Dendritic cell treated with granulocyte-macrophage colony-stimulating factor and Interleukin-4, amounts not matched to agents 40 ng/mL and 50 ng/mL, for 4 days (primary cell): ENCODE measurements at regions of chr1 and their contacts with region 1.

Region 1: GRCh38 chr1:207828485-207829158 is 76.8 kb downstream of the CD46 start:
- H3K4me3 Mint-ChIP-seq: peak overlapping the region; percentile 30
- H3K27ac Mint-ChIP-seq: peak overlapping the region; percentile 95
- H3K4me1 Mint-ChIP-seq: peaks cover 97% of the 10 kb centered on the region
- H3K27me3 Mint-ChIP-seq: no peaks in the 10 kb centered on the region

Region 2: GRCh38 chr1:207848234-207848633 is 19.6 kb after region 1 on chr1:
- intact Hi-C with region 1: loop called (anchors 2 kb)
- H3K4me3 Mint-ChIP-seq: no peak overlapping the region
- H3K27ac Mint-ChIP-seq: peak overlapping the region; percentile 79
- H3K4me1 Mint-ChIP-seq: peaks cover 81% of the 10 kb centered on the region
- H3K27me3 Mint-ChIP-seq: no peaks in the 10 kb centered on the region

Region 3: GRCh38 chr1:207868774-207869721 is 40.4 kb after region 1 on chr1:
- intact Hi-C with region 1: loop called (anchors 1 kb)
- H3K4me3 Mint-ChIP-seq: peak overlapping the region; percentile 91
- H3K27ac Mint-ChIP-seq: peak overlapping the region; percentile 83
- H3K4me1 Mint-ChIP-seq: peaks cover 88% of the 10 kb centered on the region
- H3K27me3 Mint-ChIP-seq: no peaks in the 10 kb centered on the region

Region 4: DNA sequence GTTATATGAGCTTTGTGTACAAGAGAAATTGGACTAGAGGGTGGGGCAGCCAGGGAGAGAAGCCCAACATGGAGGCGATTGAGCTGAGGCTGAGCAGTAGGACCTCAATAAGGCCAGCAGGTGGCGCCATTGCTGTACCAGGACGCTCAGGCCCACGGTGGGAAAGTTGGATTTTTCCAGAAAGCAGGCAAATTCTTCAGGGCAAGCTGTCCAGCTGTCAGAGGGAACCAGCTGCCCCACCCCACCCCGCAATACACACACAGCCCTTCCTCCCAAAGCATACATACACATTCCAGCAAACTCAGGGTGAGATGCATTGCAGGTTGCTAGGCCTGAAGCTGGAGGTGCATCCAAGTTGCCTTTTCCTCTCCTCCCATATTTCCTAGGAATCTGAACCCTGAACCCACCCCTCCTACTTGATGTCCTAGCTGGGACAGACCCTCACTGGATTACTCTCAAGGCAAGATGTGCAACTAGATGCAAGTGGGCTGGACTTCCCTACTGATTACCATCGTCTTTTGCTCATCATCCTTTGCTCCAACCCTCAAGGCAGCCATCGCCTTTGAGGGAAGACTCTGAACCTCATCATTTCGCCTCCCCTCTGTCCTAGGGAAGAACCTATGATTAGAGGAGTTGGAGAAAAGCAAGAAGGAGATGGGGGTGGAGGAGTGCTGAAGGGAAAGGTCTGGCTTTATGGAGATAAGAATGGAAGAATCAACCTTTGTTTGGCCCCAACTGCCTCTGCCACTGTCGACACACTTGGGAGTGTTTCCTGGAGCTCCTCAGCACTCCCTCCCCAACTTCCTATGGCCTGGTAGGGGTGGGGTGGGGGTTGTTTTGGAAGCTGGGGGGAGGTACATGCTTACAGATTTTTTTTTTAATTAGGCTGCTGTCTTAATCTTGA is 56.8 kb after region 1 on chr1:
- intact Hi-C with region 1: loop called (anchors 5 kb)
- H3K4me3 Mint-ChIP-seq: no peak overlapping the region
- H3K27ac Mint-ChIP-seq: peak overlapping the region; percentile 30
- H3K4me1 Mint-ChIP-seq: peaks cover 64% of the 10 kb centered on the region
- H3K27me3 Mint-ChIP-seq: peaks cover 10% of the 10 kb centered on the region

Region 5: DNA sequence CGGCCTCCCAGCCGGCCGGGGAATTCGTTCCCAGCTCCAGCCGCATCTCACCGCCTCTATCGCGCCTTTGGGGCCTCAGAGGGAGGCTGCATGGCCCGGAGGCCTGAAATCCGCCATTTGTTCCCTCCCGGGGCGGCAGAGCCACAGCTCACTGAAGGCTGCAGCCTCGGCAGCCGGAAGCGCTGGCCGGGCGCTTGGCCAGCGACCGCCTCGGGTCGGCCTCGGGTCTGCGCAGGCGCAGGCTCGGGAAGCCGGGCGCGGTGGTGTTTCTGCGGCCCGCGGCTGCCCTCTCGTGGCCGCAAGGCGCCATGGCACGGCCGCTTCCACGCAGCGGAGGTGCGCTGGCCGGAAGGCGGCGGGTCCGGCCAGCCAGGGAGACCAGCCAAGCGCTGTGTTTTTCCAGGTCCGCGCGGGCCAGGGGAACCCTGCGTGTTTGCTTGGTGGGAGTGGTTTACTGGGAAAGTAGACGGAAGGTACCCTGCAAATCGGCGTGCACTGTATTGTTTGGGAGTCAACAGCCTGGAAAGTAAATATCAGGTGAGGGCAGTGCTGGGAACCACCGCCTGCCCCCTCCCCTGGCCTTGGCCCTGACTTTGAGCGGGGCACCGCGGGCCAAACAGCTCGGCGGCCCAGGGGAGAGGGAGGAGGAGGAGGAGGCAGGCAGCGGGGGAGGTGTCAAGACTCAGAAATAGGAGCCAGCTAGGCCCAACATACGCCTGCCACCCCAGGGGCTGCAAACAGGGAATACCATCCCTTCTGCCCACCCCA is 135.0 kb after region 1 on chr1:
- intact Hi-C with region 1: loop called (anchors 1 kb)
- H3K4me3 Mint-ChIP-seq: peak overlapping the region; percentile 77
- H3K27ac Mint-ChIP-seq: peak overlapping the region; percentile 93
- H3K4me1 Mint-ChIP-seq: peaks cover 35% of the 10 kb centered on the region
- H3K27me3 Mint-ChIP-seq: peaks cover 38% of the 10 kb centered on the region